Activated B cell treated with CpG ODN at 0.5 μM for 24 hours (primary cell): ENCODE measurements at regions of chr12 and their contacts with region 1.

Region 1: DNA sequence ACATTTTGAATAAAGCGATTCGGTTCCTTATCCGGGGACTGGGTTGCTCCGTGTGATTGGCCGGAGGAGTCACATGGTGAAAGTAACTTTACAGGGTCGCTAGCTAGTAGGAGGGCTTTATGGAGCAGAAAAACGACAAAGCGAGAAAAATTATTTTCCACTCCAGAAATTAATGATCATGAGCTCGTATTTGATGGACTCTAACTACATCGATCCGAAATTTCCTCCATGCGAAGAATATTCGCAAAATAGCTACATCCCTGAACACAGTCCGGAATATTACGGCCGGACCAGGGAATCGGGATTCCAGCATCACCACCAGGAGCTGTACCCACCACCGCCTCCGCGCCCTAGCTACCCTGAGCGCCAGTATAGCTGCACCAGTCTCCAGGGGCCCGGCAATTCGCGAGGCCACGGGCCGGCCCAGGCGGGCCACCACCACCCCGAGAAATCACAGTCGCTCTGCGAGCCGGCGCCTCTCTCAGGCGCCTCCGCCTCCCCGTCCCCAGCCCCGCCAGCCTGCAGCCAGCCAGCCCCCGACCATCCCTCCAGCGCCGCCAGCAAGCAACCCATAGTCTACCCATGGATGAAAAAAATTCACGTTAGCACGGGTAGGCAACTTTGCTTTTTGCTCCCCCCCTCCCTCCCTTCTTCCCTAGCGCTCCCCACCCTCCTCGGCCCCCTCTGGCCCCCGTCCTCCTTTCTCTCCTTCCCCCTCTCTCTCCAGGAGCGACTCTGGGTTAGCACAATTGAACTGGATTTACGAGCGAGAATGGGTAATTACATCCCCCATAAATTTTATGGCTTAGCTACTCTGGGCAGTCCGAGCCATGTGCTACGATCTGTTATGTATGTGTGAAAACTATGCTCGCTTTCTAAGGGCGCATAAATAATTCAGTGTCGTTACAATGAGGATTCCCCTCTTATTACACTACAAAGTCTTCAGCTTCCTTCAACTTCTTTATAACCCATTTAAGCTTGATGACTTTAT is at the start of gene HOXC4:
- DNase-seq: no peak
- ATAC-seq: peak; percentile 75
- H3K4me3 Mint-ChIP-seq: peak within 1 kb of the TSS; percentile 88
- H3K27ac Mint-ChIP-seq: peak within 1 kb of the TSS; percentile 89
- H3K4me1 Mint-ChIP-seq: peaks cover 50% of the 10 kb centered on the region
- H3K27me3 Mint-ChIP-seq: peaks cover 25% of the 10 kb centered on the region
- CTCF ChIP-seq: no peak
- total RNA-seq, gene HOXC4: 4.3 and 4.8 TPM in 2 replicates

Region 2: GRCh38 chr12:53952871-53953734 is 100.9 kb before region 1 on chr12:
- CTCF ChIA-PET with region 1: no interaction called
- POLR2A ChIA-PET with region 1: no interaction called
- intact Hi-C with region 1: loop called (anchors 5 kb)
- DNase-seq: no peak
- ATAC-seq: no peak
- H3K4me3 Mint-ChIP-seq: no peak overlapping the region
- H3K27ac Mint-ChIP-seq: no peak overlapping the region
- H3K4me1 Mint-ChIP-seq: peaks cover 13% of the 10 kb centered on the region
- H3K27me3 Mint-ChIP-seq: peaks cover 71% of the 10 kb centered on the region
- CTCF ChIP-seq: no peak

Region 3: GRCh38 chr12:54082397-54082892 is 28.4 kb after region 1 on chr12:
- CTCF ChIA-PET with region 1: no interaction called
- POLR2A ChIA-PET with region 1: interaction called, 14 read pairs
- intact Hi-C with region 1: loop called (anchors 1 kb)
- DNase-seq: peak; percentile 41
- ATAC-seq: peak; percentile 37
- H3K4me3 Mint-ChIP-seq: peak overlapping the region; percentile 85
- H3K27ac Mint-ChIP-seq: peak overlapping the region; percentile 91
- H3K4me1 Mint-ChIP-seq: peaks cover 20% of the 10 kb centered on the region
- H3K27me3 Mint-ChIP-seq: no peaks in the 10 kb centered on the region
- CTCF ChIP-seq: no peak

Region 4: GRCh38 chr12:54126029-54126695 is 72.1 kb after region 1 on chr12:
- CTCF ChIA-PET with region 1: no interaction called
- POLR2A ChIA-PET with region 1: interaction called, 11 read pairs
- intact Hi-C with region 1: no loop called
- DNase-seq: peak; percentile 24
- ATAC-seq: peak; percentile 37
- H3K4me3 Mint-ChIP-seq: peak overlapping the region; percentile 73
- H3K27ac Mint-ChIP-seq: no peak overlapping the region
- H3K4me1 Mint-ChIP-seq: peaks cover 17% of the 10 kb centered on the region
- H3K27me3 Mint-ChIP-seq: peaks cover 66% of the 10 kb centered on the region
- CTCF ChIP-seq: no peak